ENCODE measurements at regions of chr5 and their contacts with region 1.

Region 1: GRCh38 chr5:123598028-123598689 is 86.2 kb downstream of the CSNK1G3 start:
- DNase-seq: no peak
- H3K4me3 ChIP-seq: no peak overlapping the region
- CTCF ChIP-seq: no peak

Region 2: DNA sequence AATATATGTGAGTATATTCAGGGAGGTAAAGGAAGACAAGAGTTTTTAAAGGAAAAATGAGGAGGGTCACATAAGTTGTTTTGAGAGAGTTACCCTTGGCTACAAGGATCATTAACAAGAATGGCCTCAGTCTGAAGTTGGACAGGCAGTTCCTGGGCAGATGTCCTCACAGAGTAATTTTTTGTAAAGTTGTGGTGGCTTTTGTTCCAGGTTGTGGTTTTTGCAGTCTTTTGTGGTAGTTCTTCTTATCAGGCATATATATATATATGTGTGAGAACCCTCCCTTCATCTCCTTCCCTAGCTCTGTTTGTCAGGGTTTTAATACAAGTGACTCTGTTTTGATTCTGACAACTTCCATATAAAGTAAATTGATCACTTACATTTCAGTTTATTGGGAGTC is 26.2 kb before region 1 on chr5:
- CTCF ChIA-PET with region 1: no interaction called
- POLR2A ChIA-PET with region 1: no interaction called
- DNase-seq: no peak
- H3K4me3 ChIP-seq: no peak overlapping the region
- CTCF ChIP-seq: no peak

Region 3: GRCh38 chr5:123610665-123611405 is 12.7 kb after region 1 on chr5:
- CTCF ChIA-PET with region 1: interaction called, 11 read pairs
- POLR2A ChIA-PET with region 1: no interaction called
- DNase-seq: peak; percentile 26
- H3K4me3 ChIP-seq: no peak overlapping the region
- CTCF ChIP-seq: peak; percentile 76

Region 4: DNA sequence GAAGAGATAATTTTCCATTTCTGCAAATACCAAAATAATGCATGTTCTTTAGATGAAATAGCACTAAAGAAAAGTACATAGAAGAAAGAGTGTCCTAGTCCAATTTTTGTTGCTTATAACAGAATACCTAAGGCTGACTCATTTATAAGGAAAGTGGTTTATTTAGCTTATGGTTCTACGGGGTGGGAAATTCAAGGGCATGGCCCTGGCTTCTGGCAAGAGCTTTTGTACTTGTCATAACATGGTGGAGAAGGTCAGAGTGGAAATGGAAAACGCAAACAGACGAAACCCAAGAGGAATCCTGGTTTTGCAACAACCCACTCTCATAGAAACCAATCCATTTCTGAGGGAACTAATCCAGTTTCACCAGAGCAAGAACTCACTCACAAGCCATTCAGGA is 197.5 kb after region 1 on chr5:
- CTCF ChIA-PET with region 1: no interaction called
- POLR2A ChIA-PET with region 1: no interaction called
- DNase-seq: no peak
- H3K4me3 ChIP-seq: no peak overlapping the region
- CTCF ChIP-seq: no peak

Measured in AG04449 (cell line).